Naive thymus-derived CD4-positive, alpha-beta T cell (primary cell): ENCODE measurements at regions of chr16 and their contacts with region 1.

Region 1: GRCh38 chr16:72927199-72928089 is 120.5 kb downstream of the ZFHX3 start:
- DNase-seq: no peak
- ATAC-seq: peak; percentile 43
- H3K4me3 ChIP-seq: no peak overlapping the region
- H3K4me3 Mint-ChIP-seq: no peak overlapping the region
- H3K27ac ChIP-seq: no peak overlapping the region
- H3K27ac Mint-ChIP-seq: no peak overlapping the region
- H3K4me1 ChIP-seq: no peaks in the 10 kb centered on the region
- H3K4me1 Mint-ChIP-seq: peaks cover 0 to 19% (median 3%) of the 10 kb centered on the region in 7 donors
- H3K27me3 ChIP-seq: no peaks in the 10 kb centered on the region
- H3K27me3 Mint-ChIP-seq: peaks cover 0 to 4% (median 0%) of the 10 kb centered on the region in 5 donors

Region 2: DNA sequence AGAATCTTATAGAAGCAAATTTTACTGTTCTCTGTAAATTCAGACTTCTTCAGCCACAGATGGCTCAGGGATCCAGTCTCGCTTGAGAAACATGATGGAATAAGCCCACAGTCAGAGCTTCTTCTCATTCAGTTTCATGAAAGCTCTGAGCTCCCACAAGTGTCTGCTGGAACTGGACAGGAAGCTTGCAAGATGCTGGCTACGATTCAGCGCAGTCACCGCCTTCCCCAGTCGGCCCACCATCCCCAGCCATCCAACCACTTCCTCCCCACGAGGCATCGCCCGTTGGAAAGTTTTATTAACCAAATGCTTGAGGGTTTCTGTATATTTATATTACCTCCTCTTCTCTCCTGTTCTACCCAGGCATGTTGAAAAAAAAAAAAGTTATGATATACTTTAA is 51.2 kb before region 1 on chr16:
- CTCF ChIA-PET with region 1: no interaction called
- POLR2A ChIA-PET with region 1: no interaction called
- intact Hi-C with region 1: loop called in 1 of 2 experiments (anchors 10 kb)
- DNase-seq: peak in 1 of 9 donors; percentile 42
- ATAC-seq: peak; percentile 63
- H3K4me3 ChIP-seq: no peak overlapping the region
- H3K4me3 Mint-ChIP-seq: peak overlapping the region in 1 of 10 donors; percentile 60
- H3K27ac ChIP-seq: no peak overlapping the region
- H3K27ac Mint-ChIP-seq: peak overlapping the region in 1 of 9 donors; percentile 48
- H3K4me1 ChIP-seq: no peaks in the 10 kb centered on the region
- H3K4me1 Mint-ChIP-seq: peaks cover 0 to 25% (median 2%) of the 10 kb centered on the region in 7 donors
- H3K27me3 ChIP-seq: no peaks in the 10 kb centered on the region
- H3K27me3 Mint-ChIP-seq: peaks cover 0 to 21% (median 4%) of the 10 kb centered on the region in 5 donors